ENCODE measurements at regions of chr10 and their contacts with region 1.

Region 1: GRCh38 chr10:89369156-89370105 is 8.4 kb upstream of the IFIT1B start:
- DNase-seq: peak; percentile 79
- H3K4me3 ChIP-seq: no peak overlapping the region
- H3K27ac ChIP-seq: peak overlapping the region; percentile 61
- H3K4me1 ChIP-seq: peaks cover 34% of the 10 kb centered on the region
- H3K27me3 ChIP-seq: no peaks in the 10 kb centered on the region

Region 2: GRCh38 chr10:89251409-89252224 is 117.8 kb before region 1 on chr10 and contains the start of gene LIPA:
- in situ Hi-C with region 1: loop called (anchors 5 kb)
- DNase-seq: peak; percentile 100
- H3K4me3 ChIP-seq: peak within 1 kb of the TSS; percentile 92
- H3K27ac ChIP-seq: no peak within 1 kb of the TSS; the same call in 1 of the 2 replicates
- H3K4me1 ChIP-seq: peaks cover 8% of the 10 kb centered on the region; the same call in 1 of the 2 replicates
- H3K27me3 ChIP-seq: no peaks in the 10 kb centered on the region
- total RNA-seq, gene LIPA: 109 and 113 TPM in 2 replicates

Region 3: GRCh38 chr10:90042075-90042474 is 672.6 kb after region 1 on chr10:
- in situ Hi-C with region 1: no loop called
- DNase-seq: no peak
- H3K4me3 ChIP-seq: no peak overlapping the region
- H3K27ac ChIP-seq: no peak overlapping the region
- H3K4me1 ChIP-seq: no peaks in the 10 kb centered on the region
- H3K27me3 ChIP-seq: no peaks in the 10 kb centered on the region